GM18951 (cell line): ENCODE measurements at regions of chr5 and their contacts with region 1.

Region 1: DNA sequence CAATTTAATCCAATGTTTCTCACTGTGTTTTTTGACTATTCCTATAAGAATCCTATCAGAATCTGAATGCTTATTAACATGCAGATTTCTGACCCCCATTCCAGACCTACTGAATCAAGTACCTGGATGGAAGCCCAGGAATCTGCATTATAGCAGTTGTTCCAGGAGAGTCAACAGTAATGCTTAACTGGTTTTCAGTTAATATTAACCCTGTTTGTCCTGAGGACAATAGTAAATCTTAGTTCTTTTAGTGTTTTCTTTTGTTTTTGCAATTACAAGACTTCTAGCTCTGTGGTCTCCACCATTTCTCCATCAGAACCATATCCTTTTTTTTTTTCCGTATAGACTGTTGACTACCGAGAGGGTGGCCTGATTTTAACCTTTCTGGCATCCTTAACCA is 168.2 kb downstream of the SREK1 start:
- POLR2A ChIP-seq: no peak

Region 2: GRCh38 chr5:66742083-66742895 is 430.0 kb after region 1 on chr5:
- in situ Hi-C with region 1: loop called (anchors 10 kb)
- POLR2A ChIP-seq: no peak